Left cardiac atrium (tissue), 4 donors: ENCODE measurements at regions of chr5 and their contacts with region 1.

Region 1: DNA sequence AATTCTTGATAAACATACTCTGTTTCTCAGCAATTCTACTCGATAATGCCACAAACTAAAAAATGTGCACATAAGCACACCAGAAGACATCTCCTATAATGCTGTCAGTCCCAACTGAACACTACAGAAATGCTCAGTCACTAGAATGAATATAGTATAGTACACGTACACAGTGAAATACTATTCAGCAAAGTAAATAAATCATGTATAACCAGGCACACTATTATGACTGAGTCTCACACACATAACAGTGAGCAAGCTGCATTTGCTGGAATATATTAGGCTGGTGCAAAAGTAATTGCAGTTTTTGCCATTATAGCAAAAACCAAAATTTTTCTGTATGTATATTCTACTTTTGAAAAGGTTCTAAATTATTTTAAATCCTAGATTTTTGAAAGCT is 310.2 kb downstream of the CTNND2 start:
- DNase-seq: no peak
- ATAC-seq: no peak

Region 2: GRCh38 chr5:11000515-11001353 is 593.3 kb before region 1 on chr5:
- intact Hi-C with region 1: loop called in 1 of 2 experiments (anchors 5 kb)
- DNase-seq: no peak
- ATAC-seq: peak; percentile 87 to 94

Region 3: GRCh38 chr5:11524188-11524587 is 69.8 kb before region 1 on chr5:
- intact Hi-C with region 1: no loop called
- DNase-seq: no peak
- ATAC-seq: no peak

Region 4: DNA sequence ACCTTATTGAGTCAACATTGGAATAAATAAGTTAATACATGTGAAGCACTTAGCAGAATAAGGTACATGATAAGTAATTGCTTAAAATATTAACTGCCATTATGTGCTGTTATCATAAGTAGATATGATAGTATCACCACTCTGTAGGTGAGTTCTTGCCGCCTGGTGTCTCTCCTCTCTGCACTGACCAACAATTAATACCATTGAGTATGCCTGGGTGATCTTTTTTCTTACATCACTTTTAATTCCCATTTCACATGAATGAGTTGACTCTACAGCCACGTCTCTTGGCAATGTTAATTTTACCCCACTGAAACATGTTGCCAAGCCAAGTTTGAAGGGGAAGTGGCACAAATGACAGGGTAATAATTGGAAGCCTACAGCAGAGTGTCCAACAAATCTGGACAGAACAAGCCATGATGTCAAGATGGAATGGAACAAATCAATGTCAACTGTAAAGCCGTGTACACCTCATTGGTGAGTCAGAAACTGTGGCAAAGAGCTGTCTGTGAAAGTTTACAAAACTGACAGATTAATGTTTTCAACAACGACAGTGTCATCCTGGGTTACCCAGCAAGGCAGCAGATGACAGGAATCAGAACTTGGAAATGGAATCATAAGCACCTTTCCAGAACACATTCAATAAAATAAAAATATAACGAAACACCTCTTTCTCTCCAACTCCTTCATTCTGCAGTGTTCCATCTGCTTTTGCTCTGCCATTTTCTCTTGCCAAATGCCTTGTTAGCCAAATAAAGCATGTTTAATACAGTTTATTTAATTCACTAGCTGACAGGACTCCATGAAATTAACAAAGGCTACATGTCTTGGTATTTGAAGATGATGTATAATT is 20.7 kb before region 1 on chr5:
- intact Hi-C with region 1: no loop called
- DNase-seq: no peak
- ATAC-seq: peak in 1 of 2 donors; percentile 71

Region 5: DNA sequence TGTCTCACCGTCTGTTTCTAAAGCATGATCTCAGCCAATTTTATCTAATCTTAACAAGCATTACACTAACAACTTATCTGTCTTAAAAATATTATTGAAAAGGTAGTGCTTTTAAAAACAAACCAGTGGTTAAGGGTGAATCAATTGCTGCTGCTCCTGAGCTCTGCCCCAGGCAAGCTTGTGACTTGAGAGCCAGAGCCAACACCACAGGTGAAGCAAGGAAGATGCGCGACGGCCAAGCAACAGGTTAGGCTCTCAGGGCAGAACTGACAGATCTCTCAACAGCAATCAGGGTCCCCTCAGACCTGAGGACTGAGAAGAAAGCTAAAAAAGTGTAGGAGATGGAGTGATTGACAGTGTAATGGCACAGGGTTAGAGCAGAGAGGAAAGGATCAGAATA is 150.1 kb after region 1 on chr5:
- intact Hi-C with region 1: no loop called
- DNase-seq: no peak
- ATAC-seq: no peak

Region 6: GRCh38 chr5:11955331-11955730 is 361.3 kb after region 1 on chr5:
- intact Hi-C with region 1: no loop called
- DNase-seq: no peak
- ATAC-seq: no peak